Transverse colon (tissue), 4 donors: ENCODE measurements at regions of chr3 and their contacts with region 1.

Region 1: GRCh38 chr3:117499189-117499870 is 789.8 kb downstream of the TUSC7 start:
- DNase-seq: no peak
- H3K4me3 ChIP-seq: no peak overlapping the region
- H3K27ac ChIP-seq: no peak overlapping the region
- H3K4me1 ChIP-seq: no peaks in the 10 kb centered on the region
- H3K27me3 ChIP-seq: no peaks in the 10 kb centered on the region
- CTCF ChIP-seq: no peak
- EP300 ChIP-seq: no peak
- POLR2A ChIP-seq: no peak

Region 2: DNA sequence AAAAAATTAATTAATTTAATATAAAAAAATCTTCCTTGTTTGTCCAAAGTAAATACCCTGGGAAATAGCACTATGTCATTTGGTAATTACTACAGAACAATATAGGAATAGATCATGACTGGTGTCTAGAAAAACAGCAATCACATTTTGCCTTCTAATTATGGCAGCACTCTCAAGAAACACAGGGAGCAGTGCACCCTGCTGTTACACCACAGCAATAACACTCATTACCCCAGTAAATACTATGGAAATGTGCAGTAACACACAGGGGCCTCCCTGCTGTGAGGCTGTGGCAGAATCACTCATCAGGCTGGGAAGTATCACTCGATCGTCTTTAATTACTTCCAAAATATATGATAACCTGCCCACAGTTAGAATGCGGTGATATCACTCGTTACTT is 143.8 kb before region 1 on chr3:
- in situ Hi-C with region 1: no loop called
- intact Hi-C with region 1: no loop called
- DNase-seq: no peak
- H3K4me3 ChIP-seq: no peak overlapping the region
- H3K27ac ChIP-seq: no peak overlapping the region
- H3K4me1 ChIP-seq: no peaks in the 10 kb centered on the region
- H3K27me3 ChIP-seq: no peaks in the 10 kb centered on the region
- CTCF ChIP-seq: peak; percentile 40 to 62 (median 56)
- EP300 ChIP-seq: no peak
- POLR2A ChIP-seq: no peak

Region 3: GRCh38 chr3:117537949-117538348 is 38.6 kb after region 1 on chr3:
- in situ Hi-C with region 1: no loop called
- intact Hi-C with region 1: loop called (anchors 2 kb)
- DNase-seq: no peak
- H3K4me3 ChIP-seq: no peak overlapping the region
- H3K27ac ChIP-seq: no peak overlapping the region
- H3K4me1 ChIP-seq: no peaks in the 10 kb centered on the region
- H3K27me3 ChIP-seq: no peaks in the 10 kb centered on the region
- CTCF ChIP-seq: no peak
- EP300 ChIP-seq: no peak
- POLR2A ChIP-seq: no peak

Region 4: GRCh38 chr3:117572786-117573185 is 73.5 kb after region 1 on chr3:
- in situ Hi-C with region 1: no loop called
- intact Hi-C with region 1: no loop called
- DNase-seq: no peak
- H3K4me3 ChIP-seq: no peak overlapping the region
- H3K27ac ChIP-seq: no peak overlapping the region
- H3K4me1 ChIP-seq: no peaks in the 10 kb centered on the region
- H3K27me3 ChIP-seq: no peaks in the 10 kb centered on the region
- CTCF ChIP-seq: no peak
- EP300 ChIP-seq: no peak
- POLR2A ChIP-seq: no peak